HEK293T (cell line): ENCODE measurements at regions of chr16 and their contacts with region 1.

Region 1: GRCh38 chr16:1971796-1972489 is at the start of gene TBL3:
- DNase-seq: peak; percentile 95

Region 2: DNA sequence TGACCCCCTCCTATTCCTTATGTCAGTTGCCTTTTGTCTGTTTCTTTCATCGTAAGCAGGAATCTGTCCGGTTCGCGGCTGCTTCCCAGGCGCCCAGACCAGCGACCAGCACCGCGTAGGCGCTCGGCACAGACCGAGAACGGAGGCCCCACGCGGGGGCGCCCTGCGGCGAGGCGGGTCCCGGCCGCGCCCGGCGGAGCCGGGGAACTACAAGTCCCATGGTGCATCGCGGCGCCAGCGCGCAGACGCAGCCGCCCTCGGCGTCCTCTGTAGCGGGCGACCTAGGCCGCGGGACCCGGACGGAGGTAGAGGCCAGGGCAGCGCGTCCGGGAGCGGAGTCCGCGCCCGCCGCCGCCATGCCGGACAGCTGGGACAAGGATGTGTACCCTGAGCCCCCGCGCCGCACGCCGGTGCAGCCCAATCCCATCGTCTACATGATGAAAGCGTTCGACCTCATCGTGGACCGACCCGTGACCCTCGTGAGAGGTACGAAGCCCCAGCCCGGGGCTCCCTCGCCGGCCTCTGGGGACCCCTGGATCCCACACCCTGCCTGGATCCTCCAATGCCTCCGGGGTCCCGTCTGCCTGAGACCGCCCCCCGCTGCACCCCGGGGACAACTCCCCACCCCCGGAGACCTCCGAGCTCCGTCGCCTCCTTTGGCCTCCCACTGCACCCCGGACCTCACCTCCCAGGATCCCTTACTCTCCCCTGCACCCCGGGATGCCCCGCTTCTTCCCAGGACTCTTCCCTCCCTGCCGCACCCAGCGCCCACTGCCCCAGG is 12.5 kb before region 1 on chr16 and contains the start of gene NDUFB10:
- CTCF ChIA-PET with region 1: no interaction called
- POLR2A ChIA-PET with region 1: interaction called, 45 read pairs
- DNase-seq: peak; percentile 92

Region 3: GRCh38 chr16:1983544-1984346 is 11.8 kb after region 1 on chr16 and contains the start of gene GFER:
- CTCF ChIA-PET with region 1: no interaction called
- POLR2A ChIA-PET with region 1: interaction called, 88 read pairs
- DNase-seq: peak; percentile 93